ENCODE measurements at regions of chr15 and their contacts with region 1.

Region 1: GRCh38 chr15:90087454-90088154 is 14.7 kb downstream of the IDH2 start:
- DNase-seq: no peak
- ATAC-seq: peak; percentile 72
- H3K4me3 ChIP-seq: no peak overlapping the region
- H3K27ac ChIP-seq: no peak overlapping the region
- H3K4me1 ChIP-seq: no peaks in the 10 kb centered on the region; the same call in 1 of the 2 replicates
- H3K27me3 ChIP-seq: no peaks in the 10 kb centered on the region
- CTCF ChIP-seq: no peak

Region 2: DNA sequence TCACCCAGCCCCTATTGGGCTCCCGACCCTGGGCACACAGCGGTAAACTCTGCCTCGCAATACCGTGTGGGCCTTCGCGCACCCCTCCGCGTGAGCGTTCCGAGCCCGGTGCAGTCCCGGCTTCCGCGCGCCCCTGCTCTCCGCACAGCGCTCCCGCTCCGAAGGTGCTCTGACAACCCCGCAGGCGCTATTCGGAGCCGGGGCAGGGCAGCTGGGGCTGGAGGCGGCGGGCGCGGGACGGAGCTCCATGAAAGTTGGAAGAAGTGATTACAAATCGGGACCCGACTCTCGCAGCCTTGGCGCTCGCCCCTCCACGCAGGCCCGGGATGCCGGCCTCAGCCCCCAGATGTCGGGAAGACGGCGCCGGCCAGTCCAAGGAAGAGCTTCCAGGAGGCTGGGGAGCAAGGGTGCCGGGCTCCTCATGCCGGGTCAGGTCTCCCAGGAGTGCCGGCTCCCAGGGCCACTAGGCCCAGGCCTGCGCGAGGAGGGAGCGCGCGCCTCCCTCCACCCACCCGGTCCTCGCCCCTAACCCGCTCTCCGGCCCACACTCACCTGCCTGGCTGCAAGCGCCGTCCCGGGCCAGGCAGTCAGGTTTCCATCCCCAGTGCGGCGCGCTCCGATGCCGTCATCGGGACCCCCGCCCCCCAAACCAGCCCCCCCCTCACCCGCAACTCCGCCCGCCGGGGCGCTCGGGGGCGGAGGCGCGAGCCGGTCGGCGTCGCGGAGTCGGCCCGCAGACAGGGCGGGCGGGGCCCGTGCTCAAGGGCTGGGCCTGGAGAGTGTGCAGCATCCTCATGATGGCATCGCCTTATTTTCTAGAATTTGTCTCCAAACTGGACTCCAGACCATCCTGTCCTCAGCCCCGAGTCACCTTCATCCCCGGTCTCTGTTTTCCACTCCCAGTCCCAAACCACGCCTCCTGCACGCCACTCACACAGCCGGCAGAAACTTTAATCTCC is 432.5 kb before region 1 on chr15 and contains the start of gene KIF7:
- CTCF ChIA-PET with region 1: no interaction called
- POLR2A ChIA-PET with region 1: no interaction called
- in situ Hi-C with region 1: no loop called
- intact Hi-C with region 1: no loop called
- DNase-seq: no peak
- ATAC-seq: peak; percentile 82
- H3K4me3 ChIP-seq: peak within 1 kb of the TSS; percentile 59 to 60
- H3K27ac ChIP-seq: peak within 1 kb of the TSS; percentile 35; the same call in 1 of the 2 replicates
- H3K4me1 ChIP-seq: no peaks in the 10 kb centered on the region
- H3K27me3 ChIP-seq: no peaks in the 10 kb centered on the region; the same call in 1 of the 2 replicates
- CTCF ChIP-seq: no peak
- total RNA-seq, gene KIF7: 6.5 TPM

Region 3: GRCh38 chr15:89820666-89821611 is 266.7 kb before region 1 on chr15:
- CTCF ChIA-PET with region 1: no interaction called
- POLR2A ChIA-PET with region 1: no interaction called
- in situ Hi-C with region 1: no loop called
- intact Hi-C with region 1: no loop called
- DNase-seq: peak; percentile 78
- ATAC-seq: peak; percentile 81
- H3K4me3 ChIP-seq: peak overlapping the region; percentile 4 to 46; a peak in 3 of 4 replicates
- H3K27ac ChIP-seq: peak overlapping the region; percentile 91
- H3K4me1 ChIP-seq: peaks cover 59% of the 10 kb centered on the region
- H3K27me3 ChIP-seq: no peaks in the 10 kb centered on the region
- CTCF ChIP-seq: no peak

Region 4: DNA sequence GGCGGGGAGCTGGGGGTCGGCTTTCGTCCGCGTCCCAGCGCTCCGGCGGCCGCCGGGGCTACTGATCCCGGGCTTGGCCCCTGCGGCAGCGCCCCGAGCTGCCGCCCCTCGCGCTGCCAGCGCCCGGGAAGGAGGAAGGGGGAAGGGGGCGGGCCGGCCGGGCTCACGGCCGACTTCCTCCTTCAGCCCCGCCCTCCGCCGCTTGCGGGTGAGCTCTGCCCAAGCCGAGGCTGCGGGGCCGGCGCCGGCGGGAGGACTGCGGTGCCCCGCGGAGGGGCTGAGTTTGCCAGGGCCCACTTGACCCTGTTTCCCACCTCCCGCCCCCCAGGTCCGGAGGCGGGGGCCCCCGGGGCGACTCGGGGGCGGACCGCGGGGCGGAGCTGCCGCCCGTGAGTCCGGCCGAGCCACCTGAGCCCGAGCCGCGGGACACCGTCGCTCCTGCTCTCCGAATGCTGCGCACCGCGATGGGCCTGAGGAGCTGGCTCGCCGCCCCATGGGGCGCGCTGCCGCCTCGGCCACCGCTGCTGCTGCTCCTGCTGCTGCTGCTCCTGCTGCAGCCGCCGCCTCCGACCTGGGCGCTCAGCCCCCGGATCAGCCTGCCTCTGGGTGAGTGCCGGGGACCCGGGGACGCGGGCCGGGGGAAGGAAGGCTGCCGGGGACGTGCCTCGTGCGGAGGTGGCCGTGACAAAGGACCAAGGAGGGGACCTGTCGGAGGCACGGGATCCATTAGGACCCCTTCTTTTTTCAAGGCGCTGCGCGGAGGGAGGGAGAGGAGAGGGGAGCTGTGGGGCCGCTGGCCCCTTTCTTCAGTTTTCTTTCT is 113.7 kb after region 1 on chr15 and contains the start of gene SEMA4B:
- CTCF ChIA-PET with region 1: interaction called, 13 read pairs
- POLR2A ChIA-PET with region 1: no interaction called
- in situ Hi-C with region 1: no loop called
- intact Hi-C with region 1: no loop called
- DNase-seq: no peak
- ATAC-seq: peak; percentile 79
- H3K4me3 ChIP-seq: peak within 1 kb of the TSS; percentile 87 to 100
- H3K27ac ChIP-seq: peak within 1 kb of the TSS; percentile 100
- H3K4me1 ChIP-seq: peaks cover 47% of the 10 kb centered on the region
- H3K27me3 ChIP-seq: no peaks in the 10 kb centered on the region
- CTCF ChIP-seq: no peak
- total RNA-seq, gene SEMA4B: 600 TPM

Region 5: DNA sequence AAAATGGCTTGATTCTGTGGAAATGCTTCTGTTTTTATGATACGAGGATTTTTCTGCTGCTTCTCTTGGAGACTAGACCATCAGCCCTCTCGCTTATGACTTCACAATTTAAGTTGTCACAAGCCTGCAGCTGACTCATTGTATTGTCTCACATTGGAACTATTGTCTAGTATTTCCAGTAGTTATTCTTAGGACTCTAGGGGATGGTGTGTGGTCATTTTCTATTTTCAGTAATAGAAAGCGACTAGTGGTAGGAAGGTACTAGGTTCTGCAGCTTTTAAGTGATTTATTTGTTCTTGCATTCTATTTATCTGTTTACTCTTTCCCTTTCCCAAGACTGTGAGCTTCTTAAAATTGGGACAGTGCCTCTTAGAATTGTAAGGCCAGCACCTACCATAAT is 375.8 kb after region 1 on chr15:
- CTCF ChIA-PET with region 1: interaction called, 12 read pairs
- POLR2A ChIA-PET with region 1: no interaction called
- in situ Hi-C with region 1: no loop called
- intact Hi-C with region 1: no loop called
- DNase-seq: peak; percentile 33
- ATAC-seq: no peak
- H3K4me3 ChIP-seq: no peak overlapping the region
- H3K27ac ChIP-seq: no peak overlapping the region
- H3K4me1 ChIP-seq: no peaks in the 10 kb centered on the region
- H3K27me3 ChIP-seq: no peaks in the 10 kb centered on the region
- CTCF ChIP-seq: no peak

Region 6: DNA sequence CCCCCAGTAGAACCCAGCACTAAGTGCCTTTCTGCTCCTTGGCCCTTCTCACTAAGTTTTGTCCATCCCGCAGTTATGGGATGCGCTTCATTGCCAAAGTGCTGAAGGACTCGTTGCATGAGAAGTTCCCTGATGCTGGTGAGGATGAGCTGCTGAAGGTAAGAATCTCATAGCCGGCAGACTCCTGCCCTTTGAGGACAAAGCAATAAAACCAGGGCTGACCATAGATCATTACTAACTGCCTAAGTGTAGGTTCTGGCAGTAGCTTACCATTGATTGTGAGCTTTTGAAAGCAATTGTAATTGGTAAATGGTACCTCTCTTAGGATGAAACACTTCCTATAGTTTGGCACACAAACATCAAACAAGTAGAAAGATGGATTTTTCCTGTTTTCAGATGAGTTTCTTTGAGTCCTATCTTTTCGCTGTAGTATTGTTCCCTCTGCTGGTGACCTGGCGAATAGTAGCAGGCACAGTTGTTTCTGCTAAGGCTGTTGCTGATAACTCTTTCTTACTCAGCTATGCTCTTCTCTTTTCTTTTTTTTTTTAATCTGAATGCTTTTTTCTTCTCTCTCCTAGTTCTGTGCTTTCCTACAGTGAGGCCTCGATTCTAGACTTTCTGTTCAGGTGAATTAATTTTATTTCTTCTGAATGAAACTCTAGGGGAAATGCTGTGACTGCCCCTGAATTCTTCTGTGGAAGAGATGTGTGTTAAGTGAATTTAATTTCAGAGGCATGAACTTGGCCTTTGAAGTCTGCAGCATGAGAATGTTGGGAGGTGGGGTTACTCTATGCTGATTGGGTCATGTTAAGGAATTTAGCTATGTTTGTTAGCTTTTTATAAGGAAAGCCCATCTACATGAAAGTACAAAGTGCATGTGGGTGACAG is 394.8 kb after region 1 on chr15:
- CTCF ChIA-PET with region 1: no interaction called
- POLR2A ChIA-PET with region 1: no interaction called
- in situ Hi-C with region 1: no loop called
- intact Hi-C with region 1: no loop called
- DNase-seq: peak; percentile 18
- ATAC-seq: peak; percentile 62; the same call in 1 of the 2 replicates
- H3K4me3 ChIP-seq: no peak overlapping the region
- H3K27ac ChIP-seq: no peak overlapping the region
- H3K4me1 ChIP-seq: peaks cover 9% of the 10 kb centered on the region; the same call in 1 of the 2 replicates
- H3K27me3 ChIP-seq: no peaks in the 10 kb centered on the region
- CTCF ChIP-seq: peak; percentile 77